Ovary (tissue), 10 donors: ENCODE measurements at regions of chr7 and their contacts with region 1.

Region 1: DNA sequence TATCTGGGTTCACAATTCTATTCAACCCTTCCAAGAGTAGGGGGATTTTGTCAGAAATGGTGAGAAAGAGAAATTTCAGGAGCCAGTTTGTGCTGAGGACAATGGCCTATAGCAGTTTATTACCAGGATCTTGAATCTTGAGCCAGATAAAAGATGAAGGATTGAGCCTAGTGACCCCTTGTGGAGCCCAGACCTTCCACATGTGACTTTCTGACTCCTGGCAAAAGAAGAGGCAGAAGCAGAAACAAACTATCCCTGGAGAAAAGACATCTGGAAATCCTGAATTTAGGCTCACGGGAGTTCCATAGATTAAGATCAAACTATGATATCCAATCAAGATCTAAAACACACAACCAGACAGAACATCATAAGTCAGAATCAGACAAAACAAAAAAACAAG is 60.9 kb upstream of the CHRM2 start:
- DNase-seq: no peak
- H3K4me3 ChIP-seq: no peak overlapping the region
- H3K27ac ChIP-seq: no peak overlapping the region
- H3K4me1 ChIP-seq: no peaks in the 10 kb centered on the region
- H3K27me3 ChIP-seq: no peaks in the 10 kb centered on the region
- CTCF ChIP-seq: no peak
- EP300 ChIP-seq: no peak
- POLR2A ChIP-seq: no peak

Region 2: GRCh38 chr7:135761751-135762488 is 1045.7 kb before region 1 on chr7:
- intact Hi-C with region 1: loop called in 1 of 4 experiments (anchors 10 kb)
- DNase-seq: no peak
- H3K4me3 ChIP-seq: no peak overlapping the region
- H3K27ac ChIP-seq: no peak overlapping the region
- H3K4me1 ChIP-seq: no peaks in the 10 kb centered on the region
- H3K27me3 ChIP-seq: no peaks in the 10 kb centered on the region
- CTCF ChIP-seq: no peak
- EP300 ChIP-seq: no peak
- POLR2A ChIP-seq: no peak

Region 3: DNA sequence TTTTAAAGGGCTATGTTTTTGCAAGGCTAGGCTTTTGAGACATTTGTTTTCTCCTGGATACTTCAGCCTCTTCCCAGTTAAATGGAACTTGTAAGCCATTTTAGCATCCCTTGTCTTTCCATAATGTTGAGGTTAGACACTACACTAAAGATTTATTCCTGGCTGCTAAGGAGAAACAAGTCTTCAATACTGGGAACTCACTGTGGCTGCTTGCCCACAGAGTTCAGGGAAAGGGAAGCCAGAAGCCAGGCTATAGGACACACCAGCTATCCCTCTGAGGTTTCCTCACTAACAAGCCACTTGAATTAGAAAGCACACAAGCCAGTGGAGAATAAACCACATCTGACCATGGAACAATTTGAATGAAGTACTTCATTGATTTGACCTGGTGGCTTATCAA is 360.8 kb before region 1 on chr7:
- intact Hi-C with region 1: loop called in 1 of 4 experiments (anchors 5 kb)
- DNase-seq: no peak
- H3K4me3 ChIP-seq: no peak overlapping the region
- H3K27ac ChIP-seq: no peak overlapping the region
- H3K4me1 ChIP-seq: no peaks in the 10 kb centered on the region
- H3K27me3 ChIP-seq: no peaks in the 10 kb centered on the region
- CTCF ChIP-seq: no peak
- EP300 ChIP-seq: no peak
- POLR2A ChIP-seq: no peak